ENCODE measurements at regions of chr1 and their contacts with region 1.

Region 1: DNA sequence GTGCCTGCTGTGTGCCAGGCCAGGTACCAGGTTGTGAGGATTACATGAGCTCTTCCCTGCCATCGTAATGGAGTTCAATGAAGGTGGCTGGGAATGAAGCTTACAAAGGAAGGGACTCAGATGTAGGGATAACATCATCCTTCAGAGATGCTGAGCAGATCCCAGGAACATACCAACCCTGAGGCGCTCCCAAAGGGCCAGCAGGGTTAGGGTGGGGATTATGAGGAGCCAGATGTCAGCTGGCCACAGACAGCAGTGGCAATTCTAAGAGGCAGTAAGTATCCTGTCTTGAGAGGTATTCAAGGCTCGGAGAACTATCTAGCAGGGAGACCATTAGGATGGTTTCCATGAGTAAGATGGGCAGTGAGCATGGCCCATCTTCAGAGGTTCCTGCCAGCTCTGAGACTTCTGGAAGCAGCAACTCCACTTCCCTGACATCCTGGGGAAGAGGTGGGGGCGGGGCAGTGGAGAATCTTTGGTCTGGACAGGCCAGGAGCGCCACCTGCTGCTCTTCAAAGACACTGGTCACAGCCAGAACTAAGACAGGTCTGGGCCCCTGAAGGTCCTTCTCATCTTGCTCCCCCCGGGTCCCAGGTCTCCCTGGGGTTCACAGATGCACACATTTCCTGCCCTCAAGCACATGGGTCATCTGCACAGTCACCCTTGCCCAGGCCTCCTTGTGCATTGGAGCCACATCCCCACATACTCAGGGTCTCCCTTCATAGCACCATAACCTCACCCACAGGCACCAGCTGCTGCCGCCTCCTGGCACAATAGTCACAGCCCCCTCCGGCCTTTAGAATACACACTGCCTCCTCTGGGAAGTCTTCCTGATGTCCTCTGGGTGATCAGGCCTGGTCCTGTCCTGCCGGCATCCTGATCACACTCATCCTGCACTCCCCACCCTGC is 2.7 kb upstream of the SDC3 start:
- DNase-seq: peak; percentile 74 to 81
- ATAC-seq: peak; percentile 75 to 87
- H3K4me3 ChIP-seq: no peak overlapping the region
- H3K27ac ChIP-seq: no peak overlapping the region
- H3K4me1 ChIP-seq: peaks cover 13% of the 10 kb centered on the region
- CTCF ChIP-seq: peak; percentile 76
- EP300 ChIP-seq: no peak
- POLR2A ChIP-seq: no peak
- RAD21 ChIP-seq: peak; percentile 94 to 97

Region 2: GRCh38 chr1:30727824-30728223 is 183.5 kb before region 1 on chr1:
- CTCF ChIA-PET with region 1: interaction called, 17 read pairs
- POLR2A ChIA-PET with region 1: no interaction called
- DNase-seq: no peak
- ATAC-seq: peak; percentile 36 to 39; a peak in 2 of 6 replicates
- H3K4me3 ChIP-seq: no peak overlapping the region
- H3K27ac ChIP-seq: no peak overlapping the region
- H3K4me1 ChIP-seq: no peaks in the 10 kb centered on the region
- CTCF ChIP-seq: no peak
- EP300 ChIP-seq: no peak
- POLR2A ChIP-seq: no peak
- RAD21 ChIP-seq: no peak

Region 3: GRCh38 chr1:30816211-30817076 is 94.9 kb before region 1 on chr1:
- CTCF ChIA-PET with region 1: interaction called, 743 read pairs
- POLR2A ChIA-PET with region 1: no interaction called
- DNase-seq: no peak
- ATAC-seq: peak; percentile 48 to 62; a peak in 4 of 6 replicates
- H3K4me3 ChIP-seq: no peak overlapping the region
- H3K27ac ChIP-seq: peak overlapping the region in 1 of 2 experiments; percentile 39; a peak in 1 of 6 replicates
- H3K4me1 ChIP-seq: no peaks in the 10 kb centered on the region
- CTCF ChIP-seq: no peak
- EP300 ChIP-seq: no peak
- POLR2A ChIP-seq: no peak
- RAD21 ChIP-seq: no peak

Region 4: GRCh38 chr1:30868833-30869435 is 42.4 kb before region 1 on chr1:
- CTCF ChIA-PET with region 1: interaction called, 17 read pairs
- POLR2A ChIA-PET with region 1: no interaction called
- DNase-seq: no peak
- ATAC-seq: no peak
- H3K4me3 ChIP-seq: no peak overlapping the region
- H3K27ac ChIP-seq: no peak overlapping the region
- H3K4me1 ChIP-seq: no peaks in the 10 kb centered on the region
- CTCF ChIP-seq: no peak
- EP300 ChIP-seq: no peak
- POLR2A ChIP-seq: no peak
- RAD21 ChIP-seq: no peak

Region 5: DNA sequence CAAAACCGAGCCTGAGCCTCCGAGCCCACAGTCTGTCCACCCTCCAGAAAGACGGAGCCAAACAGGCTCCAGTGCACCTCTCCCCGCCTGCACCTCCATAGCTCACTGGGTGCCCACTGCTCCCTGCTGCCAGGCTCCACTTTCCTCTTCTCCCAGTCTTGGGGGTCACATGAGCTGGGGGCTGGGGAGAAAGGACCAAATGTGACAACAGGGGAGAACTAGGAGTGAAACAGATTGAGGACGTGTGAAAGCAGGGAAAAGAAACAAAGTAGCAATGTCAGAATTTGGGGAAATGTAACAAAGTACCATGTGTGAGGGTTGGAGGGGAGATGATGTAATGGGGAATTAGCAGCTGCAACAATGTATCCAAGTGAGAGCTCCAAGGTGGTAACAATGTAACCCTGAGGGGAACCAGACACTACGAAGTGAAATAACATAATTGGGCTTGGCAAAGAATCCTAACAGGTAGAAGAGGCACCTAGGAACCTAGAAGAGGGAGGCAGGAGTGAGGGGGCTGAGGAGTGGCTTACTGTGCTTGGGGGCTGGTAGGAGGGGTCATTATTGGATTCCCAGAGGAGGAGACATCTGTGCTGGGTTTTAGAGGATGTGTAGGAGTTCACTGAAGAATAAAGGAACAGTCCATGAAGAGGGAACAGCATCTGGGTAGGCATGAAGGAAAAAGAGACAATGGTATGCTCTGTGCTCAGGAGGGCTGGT is 15.2 kb before region 1 on chr1:
- CTCF ChIA-PET with region 1: interaction called, 30 read pairs
- POLR2A ChIA-PET with region 1: no interaction called
- DNase-seq: no peak
- ATAC-seq: no peak
- H3K4me3 ChIP-seq: no peak overlapping the region
- H3K27ac ChIP-seq: peak overlapping the region in 1 of 2 experiments; percentile 7; a peak in 1 of 6 replicates
- H3K4me1 ChIP-seq: peaks cover 6% of the 10 kb centered on the region; the same call in 2 of the 3 replicates
- CTCF ChIP-seq: no peak
- EP300 ChIP-seq: no peak
- POLR2A ChIP-seq: no peak
- RAD21 ChIP-seq: no peak

Measured in A549 (cell line).